ENCODE measurements at regions of chr5 and their contacts with region 1.

Region 1: DNA sequence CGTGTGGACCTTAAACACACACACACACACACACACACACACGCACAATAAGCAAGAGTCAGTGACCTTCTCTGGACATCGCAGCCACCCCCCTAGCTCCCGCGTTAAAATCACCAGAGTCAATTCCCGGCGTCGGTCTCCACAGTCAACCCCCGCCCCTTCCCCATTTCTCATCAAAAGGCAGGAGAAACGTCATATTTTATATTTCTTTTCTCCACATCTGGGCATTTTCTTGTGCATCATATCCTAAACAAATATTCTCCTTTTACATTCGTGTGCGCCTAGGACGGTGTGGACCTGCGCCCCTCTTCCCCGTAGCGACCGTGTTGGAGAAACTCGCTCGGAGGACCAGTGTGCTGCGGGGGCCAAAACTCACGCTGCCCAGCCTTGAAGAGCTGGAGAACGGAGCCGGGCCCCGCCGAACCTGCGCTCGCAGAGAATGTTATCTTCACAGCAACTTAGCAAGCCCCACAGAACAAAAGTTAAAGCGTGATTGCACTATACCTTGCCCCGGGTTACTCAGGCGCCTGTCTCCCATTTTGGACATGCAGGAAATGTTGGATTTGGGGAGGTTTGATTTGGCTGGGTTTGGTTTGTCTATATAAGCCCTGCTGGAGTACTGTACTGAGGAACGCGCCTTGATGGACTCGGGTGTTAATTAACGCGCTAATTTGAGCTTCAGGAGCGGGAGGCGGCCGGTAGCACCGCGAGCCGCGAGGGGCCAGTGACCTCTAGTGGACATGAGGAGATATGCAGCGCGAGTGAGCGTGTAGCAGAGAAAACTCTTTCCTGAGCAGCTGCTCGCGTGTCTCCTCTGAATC is 192.4 kb downstream of the MEF2C start:
- DNase-seq: peak; percentile 34 to 74 (median 65)
- H3K4me3 ChIP-seq: no peak overlapping the region
- H3K27ac ChIP-seq: no peak overlapping the region
- H3K4me1 ChIP-seq: no peaks in the 10 kb centered on the region
- H3K27me3 ChIP-seq: no peaks in the 10 kb centered on the region
- CTCF ChIP-seq: peak; percentile 68 to 80 (median 73)
- EP300 ChIP-seq: no peak
- POLR2A ChIP-seq: no peak

Region 2: GRCh38 chr5:87780831-87781760 is 909.5 kb before region 1 on chr5:
- intact Hi-C with region 1: loop called in 3 of 4 experiments (anchors 5 to 10 kb)
- DNase-seq: peak; percentile 65 to 78 (median 73)
- H3K4me3 ChIP-seq: no peak overlapping the region
- H3K27ac ChIP-seq: no peak overlapping the region
- H3K4me1 ChIP-seq: no peaks in the 10 kb centered on the region
- H3K27me3 ChIP-seq: no peaks in the 10 kb centered on the region
- CTCF ChIP-seq: peak; percentile 43 to 65 (median 65)
- EP300 ChIP-seq: no peak
- POLR2A ChIP-seq: no peak

Region 3: GRCh38 chr5:88644676-88645075 is 45.9 kb before region 1 on chr5:
- intact Hi-C with region 1: no loop called
- DNase-seq: no peak
- H3K4me3 ChIP-seq: no peak overlapping the region
- H3K27ac ChIP-seq: no peak overlapping the region
- H3K4me1 ChIP-seq: no peaks in the 10 kb centered on the region
- H3K27me3 ChIP-seq: no peaks in the 10 kb centered on the region
- CTCF ChIP-seq: no peak
- EP300 ChIP-seq: no peak
- POLR2A ChIP-seq: no peak

Measured in ovary (tissue), 10 donors.